ENCODE measurements at regions of chr22 and their contacts with region 1.

Region 1: GRCh38 chr22:25048659-25049647 is 96.4 kb downstream of the KIAA1671 start:
- DNase-seq: peak; percentile 63
- H3K4me3 ChIP-seq: no peak overlapping the region
- H3K27ac ChIP-seq: no peak overlapping the region
- H3K4me1 ChIP-seq: peaks cover 4% of the 10 kb centered on the region
- H3K27me3 ChIP-seq: no peaks in the 10 kb centered on the region
- CTCF ChIP-seq: peak; percentile 82 to 88
- POLR2A ChIP-seq: no peak

Region 2: GRCh38 chr22:25182131-25183110 is 133.5 kb after region 1 on chr22:
- CTCF ChIA-PET with region 1: no interaction called
- POLR2A ChIA-PET with region 1: no interaction called
- dilution Hi-C with region 1: no loop called
- intact Hi-C with region 1: no loop called
- DNase-seq: no peak
- H3K4me3 ChIP-seq: no peak overlapping the region
- H3K27ac ChIP-seq: no peak overlapping the region
- H3K4me1 ChIP-seq: no peaks in the 10 kb centered on the region
- H3K27me3 ChIP-seq: no peaks in the 10 kb centered on the region
- CTCF ChIP-seq: no peak
- POLR2A ChIP-seq: no peak

Region 3: DNA sequence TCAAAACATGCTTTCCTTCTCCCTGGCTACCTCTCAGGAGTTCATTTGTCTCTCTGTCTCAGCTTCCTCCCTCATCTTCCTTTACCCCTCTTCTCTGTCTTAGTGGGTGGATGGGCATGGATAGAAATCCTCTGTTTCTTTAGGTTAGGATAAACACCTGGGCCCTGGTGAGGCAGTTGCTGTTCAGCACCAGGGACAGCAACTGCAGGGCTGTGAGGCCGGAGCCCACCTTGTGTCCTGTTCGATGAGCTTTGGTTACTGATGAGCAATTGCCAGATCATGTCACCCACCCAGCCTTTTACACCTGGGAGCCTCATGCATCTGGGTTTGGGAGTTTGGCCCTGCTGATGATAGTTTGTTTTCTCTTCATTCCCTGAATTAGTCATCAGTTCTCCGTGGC is 144.6 kb after region 1 on chr22:
- CTCF ChIA-PET with region 1: no interaction called
- POLR2A ChIA-PET with region 1: interaction called, 12 read pairs
- dilution Hi-C with region 1: no loop called
- intact Hi-C with region 1: no loop called
- DNase-seq: no peak
- H3K4me3 ChIP-seq: no peak overlapping the region
- H3K27ac ChIP-seq: no peak overlapping the region
- H3K4me1 ChIP-seq: no peaks in the 10 kb centered on the region
- H3K27me3 ChIP-seq: no peaks in the 10 kb centered on the region
- CTCF ChIP-seq: no peak
- POLR2A ChIP-seq: no peak